CD4-positive, alpha-beta memory T cell (primary cell): ENCODE measurements at regions of chr1 and their contacts with region 1.

Region 1: DNA sequence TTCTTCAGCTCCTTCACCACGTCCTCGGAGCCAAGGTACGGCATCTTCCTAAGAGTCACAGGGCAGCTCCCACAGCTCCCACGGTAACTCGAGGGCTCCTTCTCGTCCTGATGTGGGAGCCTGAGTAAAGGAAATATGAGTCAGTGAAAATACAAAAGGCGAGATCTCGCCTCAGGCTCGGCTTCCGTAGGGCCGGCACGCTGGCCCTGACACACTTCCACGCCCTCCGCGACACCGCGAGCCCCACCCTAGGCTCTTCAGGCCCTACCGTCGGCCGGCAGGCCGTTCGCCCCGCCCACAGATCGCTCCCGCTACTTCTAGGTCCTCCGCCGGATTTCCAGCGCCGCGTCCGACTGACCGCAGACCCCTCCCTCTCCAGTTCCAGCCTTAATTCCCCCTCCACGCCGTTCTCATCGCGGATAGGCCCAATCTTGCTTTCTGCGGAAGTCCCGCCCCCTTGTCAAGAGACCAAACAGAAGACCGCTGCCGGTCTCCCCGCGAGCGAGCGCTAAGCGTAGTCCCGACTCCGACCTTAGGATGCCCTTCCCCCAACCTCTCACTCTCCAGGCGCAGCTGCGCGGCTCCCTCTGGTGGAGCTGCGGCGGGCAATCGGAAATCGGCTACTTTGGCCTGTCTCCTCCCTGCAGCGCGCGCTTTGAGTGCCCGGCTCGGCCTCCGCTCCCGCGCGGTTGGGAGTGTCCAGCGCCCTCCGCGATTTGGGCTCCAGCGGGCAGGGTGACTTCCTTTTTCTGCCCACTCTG is at the starts of genes AP4B1 and DCLRE1B:
- DNase-seq: peak; percentile 97 to 99 (median 98)
- H3K4me3 ChIP-seq: peak within 1 kb of the TSS; percentile 68 to 98
- H3K4me3 Mint-ChIP-seq: peak within 1 kb of the TSS; percentile 94 to 100 (median 99)
- H3K27ac ChIP-seq: peak within 1 kb of the TSS; percentile 96
- H3K27ac Mint-ChIP-seq: peak within 1 kb of the TSS; percentile 96 to 100 (median 100)
- H3K4me1 ChIP-seq: peaks cover 44% of the 10 kb centered on the region
- H3K4me1 Mint-ChIP-seq: peaks cover 36 to 74% (median 47%) of the 10 kb centered on the region in 4 donors
- H3K27me3 ChIP-seq: no peaks in the 10 kb centered on the region
- H3K27me3 Mint-ChIP-seq: no peaks in the 10 kb centered on the region
- total RNA-seq, gene AP4B1: 74.5 to 75.5 TPM
- total RNA-seq, gene DCLRE1B: 5.1 to 5.4 TPM

Region 2: GRCh38 chr1:113759333-113760101 is 145.3 kb before region 1 on chr1 and contains the start of gene PHTF1:
- CTCF ChIA-PET with region 1: interaction called, 3 read pairs
- POLR2A ChIA-PET with region 1: interaction called, 13 read pairs
- intact Hi-C with region 1: no loop called
- DNase-seq: peak in 4 of 5 donors; percentile 33 to 70 (median 46)
- H3K4me3 ChIP-seq: peak within 1 kb of the TSS; percentile 59 to 77
- H3K4me3 Mint-ChIP-seq: peak within 1 kb of the TSS; percentile 92 to 98 (median 94)
- H3K27ac ChIP-seq: peak within 1 kb of the TSS; percentile 91
- H3K27ac Mint-ChIP-seq: peak within 1 kb of the TSS; percentile 94 to 98 (median 97)
- H3K4me1 ChIP-seq: peaks cover 16% of the 10 kb centered on the region
- H3K4me1 Mint-ChIP-seq: peaks cover 16 to 36% (median 25%) of the 10 kb centered on the region in 4 donors
- H3K27me3 ChIP-seq: no peaks in the 10 kb centered on the region
- H3K27me3 Mint-ChIP-seq: no peaks in the 10 kb centered on the region
- total RNA-seq, gene PHTF1: 8.7 to 9.8 TPM

Region 3: DNA sequence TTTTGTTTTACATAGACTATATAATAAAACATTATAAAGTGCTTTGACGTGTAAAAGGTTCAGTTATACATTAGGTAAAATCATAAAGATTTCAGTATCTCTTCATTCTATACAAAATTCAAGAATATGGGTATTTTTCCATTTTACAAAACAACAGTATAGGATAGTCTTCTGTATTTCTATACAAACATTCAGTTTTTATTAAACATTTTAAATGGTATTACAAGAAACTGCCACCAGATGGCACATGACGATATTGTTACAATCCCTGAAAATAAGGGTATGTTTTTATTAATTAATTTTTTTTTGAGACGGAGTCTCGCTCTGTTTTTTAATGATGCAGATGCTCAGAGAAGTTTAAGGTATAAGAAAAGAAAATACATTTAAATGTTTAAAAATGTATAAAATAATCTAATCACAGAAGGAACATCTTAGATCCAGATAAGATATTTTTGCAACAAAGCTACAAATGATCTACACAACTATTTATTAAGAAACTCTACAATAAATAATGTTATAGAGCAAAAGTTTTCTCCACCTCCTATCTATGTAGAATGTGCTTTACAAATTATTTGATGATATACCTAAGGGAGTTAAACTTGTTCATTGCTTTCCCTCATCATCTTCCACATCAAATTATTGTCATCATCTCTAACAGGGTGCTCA is 69.1 kb before region 1 on chr1:
- CTCF ChIA-PET with region 1: interaction called, 69 read pairs
- POLR2A ChIA-PET with region 1: interaction called, 31 read pairs
- intact Hi-C with region 1: loop called (anchors 1 kb)
- DNase-seq: peak in 4 of 5 donors; percentile 52 to 64 (median 59)
- H3K4me3 ChIP-seq: no peak overlapping the region
- H3K4me3 Mint-ChIP-seq: peak overlapping the region in 2 of 8 donors; percentile 19 to 36
- H3K27ac ChIP-seq: no peak overlapping the region
- H3K27ac Mint-ChIP-seq: peak overlapping the region in 3 of 7 donors; percentile 9 to 80 (median 65)
- H3K4me1 ChIP-seq: peaks cover 6% of the 10 kb centered on the region
- H3K4me1 Mint-ChIP-seq: peaks cover 2 to 5% (median 5%) of the 10 kb centered on the region in 4 donors
- H3K27me3 ChIP-seq: no peaks in the 10 kb centered on the region
- H3K27me3 Mint-ChIP-seq: no peaks in the 10 kb centered on the region

Region 4: GRCh38 chr1:113871597-113872113 is 33.2 kb before region 1 on chr1 and contains the start of gene PTPN22:
- CTCF ChIA-PET with region 1: interaction called, 18 read pairs
- POLR2A ChIA-PET with region 1: interaction called, 29 read pairs
- intact Hi-C with region 1: loop called (anchors 1 kb)
- DNase-seq: peak; percentile 85 to 95 (median 90)
- H3K4me3 ChIP-seq: peak within 1 kb of the TSS; percentile 48 to 71
- H3K4me3 Mint-ChIP-seq: peak within 1 kb of the TSS; percentile 85 to 95 (median 90)
- H3K27ac ChIP-seq: peak within 1 kb of the TSS; percentile 79
- H3K27ac Mint-ChIP-seq: peak within 1 kb of the TSS; percentile 96 to 99 (median 98)
- H3K4me1 ChIP-seq: peaks cover 74% of the 10 kb centered on the region
- H3K4me1 Mint-ChIP-seq: peaks cover 56 to 83% (median 66%) of the 10 kb centered on the region in 4 donors
- H3K27me3 ChIP-seq: no peaks in the 10 kb centered on the region
- H3K27me3 Mint-ChIP-seq: no peaks in the 10 kb centered on the region
- total RNA-seq, gene PTPN22: 32.2 to 33.7 TPM

Region 5: DNA sequence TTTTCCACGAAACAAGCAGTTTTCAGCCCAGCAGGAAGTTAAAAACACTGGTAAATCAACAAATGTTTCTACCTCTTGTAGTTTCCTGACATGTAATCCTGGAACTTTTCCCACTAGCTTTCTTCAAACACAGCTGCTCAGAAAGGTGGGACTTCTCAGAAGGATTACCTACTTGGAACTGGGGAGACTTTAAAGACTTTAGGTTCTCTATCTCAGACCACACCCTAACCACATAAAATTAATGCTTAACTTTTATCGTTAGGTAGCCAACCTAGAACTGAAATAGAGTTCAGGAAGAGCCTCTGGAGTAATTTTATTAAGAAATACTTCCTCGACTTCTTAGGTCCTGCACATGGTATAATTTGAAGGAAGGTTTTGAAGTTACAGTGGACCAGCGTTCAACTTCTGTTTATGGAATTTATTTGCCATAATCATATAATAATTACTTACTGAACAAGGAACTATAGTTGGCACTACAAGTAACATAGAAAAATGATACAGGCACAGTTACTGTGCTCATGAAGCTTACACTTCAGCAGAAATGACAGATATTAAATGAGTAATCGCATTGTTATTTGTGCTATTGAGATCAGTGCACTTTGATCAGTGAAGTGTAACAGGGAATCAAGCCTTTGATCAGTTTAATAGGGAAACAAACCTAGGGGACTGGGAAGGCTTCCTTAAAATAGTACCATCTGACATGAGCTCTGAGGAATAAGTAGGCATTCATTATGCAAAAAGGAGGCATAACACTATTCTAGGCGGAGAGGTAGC is 17.3 kb before region 1 on chr1 and contains the start of gene BCL2L15:
- CTCF ChIA-PET with region 1: interaction called, 5 read pairs
- POLR2A ChIA-PET with region 1: interaction called, 11 read pairs
- intact Hi-C with region 1: no loop called
- DNase-seq: no peak
- H3K4me3 ChIP-seq: no peak within 1 kb of the TSS
- H3K4me3 Mint-ChIP-seq: peak within 1 kb of the TSS; percentile 2 to 65 (median 38)
- H3K27ac ChIP-seq: no peak within 1 kb of the TSS
- H3K27ac Mint-ChIP-seq: peak within 1 kb of the TSS in 5 of 7 donors; percentile 10 to 69 (median 43)
- H3K4me1 ChIP-seq: peaks cover 22% of the 10 kb centered on the region
- H3K4me1 Mint-ChIP-seq: peaks cover 19 to 39% (median 24%) of the 10 kb centered on the region in 4 donors
- H3K27me3 ChIP-seq: no peaks in the 10 kb centered on the region
- H3K27me3 Mint-ChIP-seq: no peaks in the 10 kb centered on the region
- total RNA-seq, gene BCL2L15: 1.3 to 2.1 TPM

Region 6: DNA sequence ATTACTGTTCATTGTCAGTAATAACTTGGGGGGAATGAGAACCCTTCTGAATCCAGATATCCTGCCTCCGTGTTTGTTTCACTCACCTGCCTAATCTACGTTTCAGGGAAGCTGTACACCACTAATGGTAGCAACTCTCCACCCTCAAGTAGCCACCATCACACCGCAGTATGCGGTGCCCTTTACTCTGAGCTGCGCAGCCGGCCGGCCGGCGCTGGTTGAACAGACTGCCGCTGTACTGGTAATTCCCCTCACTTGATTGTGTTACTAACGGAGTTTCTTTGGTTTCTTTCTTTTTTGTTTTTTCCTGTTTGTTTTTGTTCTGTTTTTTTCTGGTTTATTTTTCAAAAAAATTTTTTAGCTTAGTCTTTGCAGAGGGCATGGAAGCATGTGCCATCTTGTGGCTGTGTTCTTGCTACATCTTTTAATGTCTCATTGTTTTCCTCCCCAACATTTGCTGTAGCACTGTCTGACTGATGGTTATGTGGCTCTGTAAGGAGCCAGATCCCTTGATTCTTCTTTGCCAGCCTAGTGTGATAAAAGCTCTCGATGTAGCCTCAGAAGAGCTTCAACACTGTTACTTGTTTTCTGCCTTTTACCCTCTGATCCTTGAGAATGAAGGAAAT is 58.5 kb after region 1 on chr1:
- CTCF ChIA-PET with region 1: interaction called, 14 read pairs
- POLR2A ChIA-PET with region 1: interaction called, 17 read pairs
- intact Hi-C with region 1: loop called (anchors 1 kb)
- DNase-seq: peak in 1 of 5 donors; percentile 13
- H3K4me3 ChIP-seq: no peak overlapping the region
- H3K4me3 Mint-ChIP-seq: no peak overlapping the region
- H3K27ac ChIP-seq: no peak overlapping the region
- H3K27ac Mint-ChIP-seq: peak overlapping the region in 5 of 7 donors; percentile 57 to 91 (median 71)
- H3K4me1 ChIP-seq: no peaks in the 10 kb centered on the region
- H3K4me1 Mint-ChIP-seq: peaks cover 7 to 17% (median 13%) of the 10 kb centered on the region in 4 donors
- H3K27me3 ChIP-seq: no peaks in the 10 kb centered on the region
- H3K27me3 Mint-ChIP-seq: no peaks in the 10 kb centered on the region